Right lobe of liver (tissue), 6 donors: ENCODE measurements at regions of chr1 and their contacts with region 1.

Region 1: GRCh38 chr1:8925406-8925805 is 20.3 kb upstream of the CA6 start:
- DNase-seq: no peak
- ATAC-seq: no peak
- H3K4me3 ChIP-seq: no peak overlapping the region
- H3K27ac ChIP-seq: no peak overlapping the region
- H3K4me1 ChIP-seq: no peaks in the 10 kb centered on the region
- H3K27me3 ChIP-seq: no peaks in the 10 kb centered on the region
- CTCF ChIP-seq: no peak
- POLR2A ChIP-seq: no peak

Region 2: GRCh38 chr1:8970870-8971337 is 45.5 kb after region 1 on chr1:
- intact Hi-C with region 1: loop called in 1 of 2 experiments (anchors 10 kb)
- DNase-seq: peak in 1 of 3 donors; percentile 38
- ATAC-seq: no peak
- H3K4me3 ChIP-seq: no peak overlapping the region
- H3K27ac ChIP-seq: no peak overlapping the region
- H3K4me1 ChIP-seq: no peaks in the 10 kb centered on the region
- H3K27me3 ChIP-seq: no peaks in the 10 kb centered on the region
- CTCF ChIP-seq: no peak
- POLR2A ChIP-seq: no peak

Region 3: GRCh38 chr1:8987881-8988617 is 62.6 kb after region 1 on chr1:
- intact Hi-C with region 1: loop called in 1 of 2 experiments (anchors 5 kb)
- DNase-seq: peak in 2 of 3 donors; percentile 62 to 68
- ATAC-seq: peak; percentile 74 to 84 (median 81)
- H3K4me3 ChIP-seq: no peak overlapping the region
- H3K27ac ChIP-seq: no peak overlapping the region
- H3K4me1 ChIP-seq: peaks cover 0 to 2% (median 0%) of the 10 kb centered on the region in 4 donors
- H3K27me3 ChIP-seq: no peaks in the 10 kb centered on the region
- CTCF ChIP-seq: peak; percentile 76 to 94 (median 93)
- POLR2A ChIP-seq: no peak

Region 4: DNA sequence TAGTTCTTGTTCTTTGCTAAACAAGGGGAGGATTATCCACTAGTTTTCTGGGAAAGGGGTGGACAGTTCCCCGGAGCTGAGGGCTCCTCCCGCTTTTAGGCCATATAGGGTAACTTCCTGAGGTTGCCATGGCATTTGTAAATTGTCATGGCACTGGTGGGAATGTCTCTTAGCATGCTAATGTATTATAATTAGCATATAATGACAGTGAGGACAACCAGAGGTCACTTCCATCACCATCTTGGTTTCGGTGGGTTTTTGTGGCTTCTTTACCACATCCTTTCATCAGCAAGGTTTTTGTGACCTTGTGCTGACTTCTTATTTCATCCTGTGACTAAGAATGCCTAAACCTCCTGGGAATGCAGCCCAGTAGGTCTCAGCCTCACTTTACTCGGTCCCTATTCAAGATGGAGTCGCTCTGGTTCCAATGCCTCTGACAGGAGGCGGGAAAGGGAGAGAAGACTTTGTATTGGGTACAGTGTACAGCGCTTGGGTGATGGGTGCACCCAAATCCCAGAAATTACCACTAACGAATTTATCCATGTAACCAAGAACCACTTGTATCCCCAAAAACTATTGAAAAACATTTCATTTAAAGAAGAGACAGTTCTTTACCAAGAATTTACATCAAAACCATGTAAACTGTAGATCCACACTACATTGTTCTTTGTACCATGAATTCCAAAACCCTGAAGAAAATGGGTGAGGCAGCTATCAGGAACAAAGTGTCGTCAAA is 152.8 kb after region 1 on chr1:
- intact Hi-C with region 1: no loop called
- DNase-seq: no peak
- ATAC-seq: no peak
- H3K4me3 ChIP-seq: no peak overlapping the region
- H3K27ac ChIP-seq: no peak overlapping the region
- H3K4me1 ChIP-seq: peaks cover 0 to 9% (median 0%) of the 10 kb centered on the region in 4 donors
- H3K27me3 ChIP-seq: no peaks in the 10 kb centered on the region
- CTCF ChIP-seq: no peak
- POLR2A ChIP-seq: no peak

Region 5: DNA sequence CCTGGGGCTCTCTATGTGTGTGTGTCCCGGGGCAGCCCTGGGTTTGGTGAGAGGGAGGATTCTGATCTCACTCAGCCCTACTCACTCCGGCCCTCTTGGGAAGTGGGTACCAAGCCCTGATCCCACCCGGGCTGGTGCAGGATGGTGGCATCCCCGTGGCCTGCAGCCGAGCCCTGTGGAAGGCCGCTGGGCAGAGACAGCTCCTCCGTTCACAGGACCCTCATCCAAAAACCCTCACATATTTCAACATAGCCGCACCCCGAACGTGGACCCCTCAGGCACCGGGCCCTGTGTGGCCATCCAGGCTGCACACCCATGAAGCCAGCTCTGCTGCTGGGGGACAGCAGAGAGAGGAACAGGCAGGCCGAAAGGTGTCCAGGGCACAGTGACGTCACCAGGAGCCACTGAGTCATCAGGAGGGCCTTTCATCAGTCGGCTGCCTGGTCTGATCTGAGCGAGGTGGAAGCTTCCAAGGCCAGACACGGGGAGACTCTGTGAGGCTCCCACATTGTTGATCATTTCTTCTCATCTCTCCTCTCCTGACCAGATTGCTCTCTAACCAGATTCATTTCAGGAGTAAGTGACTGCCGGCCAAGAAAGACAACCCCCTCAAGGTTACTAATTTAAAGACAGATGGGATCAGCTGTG is 219.7 kb after region 1 on chr1:
- intact Hi-C with region 1: no loop called
- DNase-seq: no peak
- ATAC-seq: peak in 2 of 4 donors; percentile 10 to 43
- H3K4me3 ChIP-seq: no peak overlapping the region
- H3K27ac ChIP-seq: no peak overlapping the region
- H3K4me1 ChIP-seq: no peaks in the 10 kb centered on the region
- H3K27me3 ChIP-seq: no peaks in the 10 kb centered on the region
- CTCF ChIP-seq: no peak
- POLR2A ChIP-seq: no peak

Region 6: GRCh38 chr1:9181176-9181906 is 255.9 kb after region 1 on chr1:
- intact Hi-C with region 1: loop called in 1 of 2 experiments (anchors 10 kb)
- DNase-seq: peak; percentile 79 to 83 (median 79)
- ATAC-seq: peak; percentile 66 to 79 (median 76)
- H3K4me3 ChIP-seq: peak overlapping the region; percentile 50 to 67 (median 64)
- H3K27ac ChIP-seq: peak overlapping the region in 2 of 3 donors; percentile 49 to 78
- H3K4me1 ChIP-seq: no peaks in the 10 kb centered on the region
- H3K27me3 ChIP-seq: no peaks in the 10 kb centered on the region
- CTCF ChIP-seq: peak; percentile 90 to 99 (median 95)
- POLR2A ChIP-seq: no peak